CD4-positive, alpha-beta T cell (primary cell): ENCODE measurements at regions of chr7 and their contacts with region 1.

Region 1: DNA sequence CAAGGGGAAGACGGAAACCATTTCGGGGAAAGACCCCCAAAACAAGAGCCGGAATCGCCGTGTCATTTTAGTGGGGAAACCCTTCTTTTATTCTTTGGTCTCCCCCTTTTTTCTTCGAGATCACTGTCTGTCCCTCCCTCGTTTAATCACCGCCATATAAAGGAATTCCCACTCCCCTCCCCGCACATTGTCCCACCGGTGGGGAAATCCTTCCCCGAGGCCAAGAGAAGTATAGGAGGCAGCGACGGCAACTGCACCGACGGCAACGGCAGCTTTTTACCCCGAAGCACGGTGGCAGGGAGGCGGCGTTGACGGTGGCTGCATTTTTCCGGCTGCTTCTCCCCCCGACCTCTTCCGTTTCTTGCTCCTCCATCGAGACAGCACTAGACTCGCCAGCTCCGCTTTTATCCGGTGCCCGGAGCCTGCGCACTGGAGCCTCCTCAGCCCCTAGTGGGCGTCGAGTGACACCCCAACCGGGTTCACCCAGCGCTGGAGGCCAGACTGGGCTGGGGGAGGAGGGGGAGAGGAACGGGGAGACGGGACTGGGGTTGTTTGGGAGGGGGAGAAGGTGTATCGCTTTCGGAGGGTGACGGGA is 687 bp upstream of the KMT2E start:
- DNase-seq: peak; percentile 90 to 98 (median 96)
- ATAC-seq: peak; percentile 59
- H3K4me3 ChIP-seq: peak overlapping the region; percentile 84
- H3K4me3 Mint-ChIP-seq: peak overlapping the region; percentile 97
- H3K27ac ChIP-seq: peak overlapping the region; percentile 100
- H3K27ac Mint-ChIP-seq: peak overlapping the region; percentile 100
- H3K4me1 ChIP-seq: peaks cover 13% of the 10 kb centered on the region
- H3K4me1 Mint-ChIP-seq: peaks cover 50% of the 10 kb centered on the region
- H3K27me3 ChIP-seq: no peaks in the 10 kb centered on the region
- H3K27me3 Mint-ChIP-seq: peaks cover 13% of the 10 kb centered on the region
- CTCF ChIP-seq: no peak

Region 2: GRCh38 chr7:105003275-105003674 is 10.0 kb before region 1 on chr7:
- CTCF ChIA-PET with region 1: interaction called, 8 read pairs
- POLR2A ChIA-PET with region 1: interaction called, 50 read pairs
- intact Hi-C with region 1: no loop called
- DNase-seq: peak in 6 of 14 experiments; percentile 18 to 63 (median 42)
- ATAC-seq: peak; percentile 81
- H3K4me3 ChIP-seq: no peak overlapping the region
- H3K4me3 Mint-ChIP-seq: peak overlapping the region; percentile 67
- H3K27ac ChIP-seq: peak overlapping the region; percentile 16 to 26
- H3K27ac Mint-ChIP-seq: peak overlapping the region; percentile 92
- H3K4me1 ChIP-seq: peaks cover 68% of the 10 kb centered on the region
- H3K4me1 Mint-ChIP-seq: peaks cover 94% of the 10 kb centered on the region
- H3K27me3 ChIP-seq: no peaks in the 10 kb centered on the region
- H3K27me3 Mint-ChIP-seq: no peaks in the 10 kb centered on the region
- CTCF ChIP-seq: no peak

Region 3: DNA sequence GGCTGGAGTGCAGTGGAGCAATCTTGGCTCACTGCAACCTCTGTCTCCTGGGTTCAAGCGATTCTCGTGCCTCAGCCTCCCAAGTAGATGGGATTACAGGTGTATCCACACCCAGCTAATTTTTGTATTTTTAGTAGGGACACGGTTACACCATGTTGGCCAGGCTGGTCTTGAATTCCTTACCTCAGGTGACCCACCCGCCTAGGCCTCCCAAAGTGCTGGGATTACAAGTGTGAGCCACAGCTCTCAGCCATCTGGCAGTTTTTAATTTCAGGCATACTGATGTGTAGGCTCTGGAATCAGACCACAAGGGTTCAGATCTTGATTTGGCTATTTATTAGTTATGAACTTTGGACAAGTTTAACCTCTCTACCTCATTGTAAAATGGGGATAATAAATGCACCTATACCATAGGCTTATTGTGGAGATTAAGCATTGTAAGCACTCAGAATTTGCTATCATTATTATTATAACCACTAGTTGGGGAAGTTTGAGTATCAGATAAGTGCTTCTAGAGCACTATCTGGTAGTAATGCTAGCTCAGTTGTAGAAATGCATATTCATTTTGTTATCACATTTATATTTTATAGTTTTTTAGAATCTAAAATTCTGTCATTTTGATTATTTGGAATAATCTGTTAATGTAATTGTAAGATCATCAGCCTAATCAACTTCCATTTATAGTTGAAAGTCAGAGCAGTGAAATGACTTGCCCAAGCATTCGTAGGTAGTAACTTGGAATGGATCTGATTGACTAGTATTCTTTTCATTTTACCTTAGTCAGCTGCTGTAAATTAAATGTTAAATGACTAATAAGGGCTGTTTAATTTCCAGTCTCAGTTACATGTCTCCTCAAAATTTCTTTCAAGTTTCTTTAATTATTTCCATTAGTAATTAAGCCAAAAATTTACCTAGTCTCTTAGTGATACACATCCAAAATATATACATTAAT is 23.2 kb after region 1 on chr7:
- CTCF ChIA-PET with region 1: interaction called, 4 read pairs
- POLR2A ChIA-PET with region 1: interaction called, 16 read pairs
- intact Hi-C with region 1: loop called (anchors 2 kb)
- DNase-seq: no peak
- ATAC-seq: no peak
- H3K4me3 ChIP-seq: no peak overlapping the region
- H3K4me3 Mint-ChIP-seq: peak overlapping the region; percentile 27
- H3K27ac ChIP-seq: no peak overlapping the region
- H3K27ac Mint-ChIP-seq: peak overlapping the region; percentile 61
- H3K4me1 ChIP-seq: peaks cover 44% of the 10 kb centered on the region
- H3K4me1 Mint-ChIP-seq: peaks cover 75% of the 10 kb centered on the region
- H3K27me3 ChIP-seq: no peaks in the 10 kb centered on the region
- H3K27me3 Mint-ChIP-seq: no peaks in the 10 kb centered on the region
- CTCF ChIP-seq: no peak

Region 4: GRCh38 chr7:105268511-105269392 is 255.4 kb after region 1 on chr7:
- CTCF ChIA-PET with region 1: no interaction called
- POLR2A ChIA-PET with region 1: interaction called, 12 read pairs
- intact Hi-C with region 1: no loop called
- DNase-seq: peak in 4 of 14 experiments; percentile 6 to 71 (median 55)
- ATAC-seq: peak; percentile 69
- H3K4me3 ChIP-seq: peak overlapping the region; percentile 59
- H3K4me3 Mint-ChIP-seq: peak overlapping the region; percentile 90
- H3K27ac ChIP-seq: peak overlapping the region in 1 of 2 donors; percentile 26
- H3K27ac Mint-ChIP-seq: peak overlapping the region; percentile 78
- H3K4me1 ChIP-seq: peaks cover 10% of the 10 kb centered on the region
- H3K4me1 Mint-ChIP-seq: peaks cover 74% of the 10 kb centered on the region
- H3K27me3 ChIP-seq: no peaks in the 10 kb centered on the region
- H3K27me3 Mint-ChIP-seq: no peaks in the 10 kb centered on the region
- CTCF ChIP-seq: no peak

Region 5: DNA sequence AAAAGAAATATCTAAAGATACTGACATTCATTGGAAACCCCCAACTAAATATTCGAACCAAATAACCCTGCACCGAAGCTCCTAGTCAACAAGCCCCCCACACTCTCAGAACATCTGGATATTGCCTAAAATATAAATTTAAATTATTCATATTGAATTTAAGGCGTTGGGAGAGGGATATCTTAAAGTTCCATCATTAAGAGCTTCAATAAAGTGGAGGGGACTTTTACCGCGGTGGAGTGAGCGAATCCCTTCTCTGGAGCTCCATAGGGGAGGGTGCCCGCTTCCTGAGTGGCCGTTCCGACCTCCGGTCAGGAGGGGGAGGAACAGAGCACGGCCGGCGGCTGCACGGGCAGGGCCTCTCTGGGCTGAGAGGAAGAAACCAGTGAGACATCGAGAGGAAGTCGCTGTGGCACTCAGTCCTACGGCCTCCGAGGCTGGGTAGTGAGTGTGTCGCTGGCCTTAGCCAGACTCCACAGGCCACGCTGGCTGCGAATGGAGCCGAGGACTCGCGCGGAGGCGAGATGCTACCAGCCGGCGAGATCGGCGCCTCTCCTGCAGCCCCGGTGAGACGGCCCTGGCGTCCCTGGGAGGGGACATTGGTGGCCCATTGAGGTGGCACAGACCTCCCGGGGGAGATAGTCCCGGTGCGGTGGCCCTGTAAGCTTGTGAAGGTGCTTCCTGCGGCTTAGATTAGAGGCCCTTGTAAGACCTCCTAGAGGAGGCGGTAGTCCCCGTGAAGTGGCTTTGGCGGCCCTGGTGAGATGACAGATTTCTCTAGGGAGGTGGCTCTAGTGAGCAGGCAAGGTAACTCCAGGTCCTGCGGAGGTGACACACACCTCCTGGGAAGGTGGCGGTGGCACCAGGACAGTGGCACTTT is 518.7 kb after region 1 on chr7 and contains the start of gene RINT1:
- CTCF ChIA-PET with region 1: no interaction called
- POLR2A ChIA-PET with region 1: interaction called, 11 read pairs
- intact Hi-C with region 1: no loop called
- DNase-seq: peak; percentile 78 to 94 (median 86)
- ATAC-seq: peak; percentile 88
- H3K4me3 ChIP-seq: peak within 1 kb of the TSS; percentile 82
- H3K4me3 Mint-ChIP-seq: peak within 1 kb of the TSS; percentile 94
- H3K27ac ChIP-seq: peak within 1 kb of the TSS; percentile 85 to 89
- H3K27ac Mint-ChIP-seq: peak within 1 kb of the TSS; percentile 87
- H3K4me1 ChIP-seq: peaks cover 35% of the 10 kb centered on the region
- H3K4me1 Mint-ChIP-seq: peaks cover 44% of the 10 kb centered on the region
- H3K27me3 ChIP-seq: no peaks in the 10 kb centered on the region
- H3K27me3 Mint-ChIP-seq: no peaks in the 10 kb centered on the region
- CTCF ChIP-seq: peak; percentile 71
- total RNA-seq, gene RINT1: 38.0 to 39.5 TPM

Region 6: GRCh38 chr7:105656903-105657521 is 643.7 kb after region 1 on chr7:
- CTCF ChIA-PET with region 1: no interaction called
- POLR2A ChIA-PET with region 1: no interaction called
- intact Hi-C with region 1: no loop called
- DNase-seq: peak; percentile 53 to 83 (median 68)
- ATAC-seq: peak; percentile 77
- H3K4me3 ChIP-seq: no peak overlapping the region
- H3K4me3 Mint-ChIP-seq: no peak overlapping the region
- H3K27ac ChIP-seq: no peak overlapping the region
- H3K27ac Mint-ChIP-seq: peak overlapping the region; percentile 21
- H3K4me1 ChIP-seq: peaks cover 10% of the 10 kb centered on the region
- H3K4me1 Mint-ChIP-seq: peaks cover 14% of the 10 kb centered on the region
- H3K27me3 ChIP-seq: no peaks in the 10 kb centered on the region
- H3K27me3 Mint-ChIP-seq: no peaks in the 10 kb centered on the region
- CTCF ChIP-seq: peak; percentile 84